ENCODE measurements at regions of chr1 and their contacts with region 1.

Region 1: GRCh38 chr1:37890378-37891014 is 31.1 kb upstream of the MTF1 start:
- DNase-seq: no peak
- H3K4me3 Mint-ChIP-seq: no peak overlapping the region
- H3K27ac Mint-ChIP-seq: no peak overlapping the region
- H3K4me1 Mint-ChIP-seq: no peaks in the 10 kb centered on the region
- H3K27me3 Mint-ChIP-seq: no peaks in the 10 kb centered on the region

Region 2: GRCh38 chr1:37978541-37978940 is 88.0 kb after region 1 on chr1:
- CTCF ChIA-PET with region 1: no interaction called
- intact Hi-C with region 1: loop called (anchors 5 kb)
- DNase-seq: no peak
- H3K4me3 Mint-ChIP-seq: no peak overlapping the region
- H3K27ac Mint-ChIP-seq: no peak overlapping the region
- H3K4me1 Mint-ChIP-seq: no peaks in the 10 kb centered on the region
- H3K27me3 Mint-ChIP-seq: no peaks in the 10 kb centered on the region

Region 3: DNA sequence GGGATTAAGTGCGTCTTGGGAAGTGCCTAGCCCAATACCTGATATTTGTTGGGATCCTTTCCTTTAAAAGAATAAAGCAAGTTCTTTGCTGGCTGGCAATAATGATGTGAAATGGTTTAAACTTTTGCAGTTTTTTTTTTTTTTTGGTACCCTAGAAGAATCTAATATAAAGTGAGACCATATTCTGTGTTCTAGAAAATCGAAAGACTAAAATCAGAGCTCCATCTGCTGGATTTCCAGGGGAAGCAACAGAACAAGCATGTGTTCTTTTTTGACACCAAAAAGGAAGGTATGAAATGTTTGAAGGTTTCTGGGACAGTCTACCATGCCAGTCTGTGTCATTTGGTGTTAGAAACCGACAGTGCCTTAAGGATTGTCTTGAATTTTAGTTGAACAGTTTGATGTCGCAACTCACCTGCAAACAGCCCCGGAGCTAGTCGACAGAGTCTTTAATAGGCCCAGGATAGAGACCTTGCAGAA is 128.4 kb after region 1 on chr1:
- CTCF ChIA-PET with region 1: no interaction called
- intact Hi-C with region 1: loop called (anchors 1 kb)
- DNase-seq: no peak
- H3K4me3 Mint-ChIP-seq: no peak overlapping the region
- H3K27ac Mint-ChIP-seq: no peak overlapping the region
- H3K4me1 Mint-ChIP-seq: peaks cover 24% of the 10 kb centered on the region
- H3K27me3 Mint-ChIP-seq: no peaks in the 10 kb centered on the region

Measured in activated naive CD4-positive, alpha-beta T cell treated with anti-CD3 and anti-CD28 coated beads for 36 hours (primary cell).